ENCODE measurements at regions of chr4 and their contacts with region 1.

Region 1: DNA sequence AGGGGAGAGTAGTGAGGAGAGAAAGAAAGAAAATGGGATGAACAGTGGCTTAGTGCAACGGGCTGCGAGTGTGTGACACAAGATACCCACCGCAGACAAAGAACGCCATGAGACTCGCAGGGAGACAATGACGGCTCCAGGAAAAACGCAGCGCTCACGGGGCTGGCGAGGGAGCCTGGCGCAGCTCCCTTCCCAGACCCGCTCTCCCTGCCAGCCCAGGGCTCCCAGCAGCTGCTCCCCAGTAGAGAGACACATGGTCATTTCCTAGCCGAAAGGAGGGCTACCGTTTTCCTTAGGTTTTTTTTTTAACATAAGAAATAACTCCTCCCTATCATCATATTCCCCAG is 149.5 kb downstream of the MAML3 start:
- DNase-seq: no peak
- H3K4me3 ChIP-seq: peak overlapping the region; percentile 29 to 41
- H3K27ac ChIP-seq: peak overlapping the region; percentile 43
- H3K4me1 ChIP-seq: peaks cover 12% of the 10 kb centered on the region
- H3K27me3 ChIP-seq: no peaks in the 10 kb centered on the region
- CTCF ChIP-seq: no peak
- POLR2A ChIP-seq: no peak

Region 2: DNA sequence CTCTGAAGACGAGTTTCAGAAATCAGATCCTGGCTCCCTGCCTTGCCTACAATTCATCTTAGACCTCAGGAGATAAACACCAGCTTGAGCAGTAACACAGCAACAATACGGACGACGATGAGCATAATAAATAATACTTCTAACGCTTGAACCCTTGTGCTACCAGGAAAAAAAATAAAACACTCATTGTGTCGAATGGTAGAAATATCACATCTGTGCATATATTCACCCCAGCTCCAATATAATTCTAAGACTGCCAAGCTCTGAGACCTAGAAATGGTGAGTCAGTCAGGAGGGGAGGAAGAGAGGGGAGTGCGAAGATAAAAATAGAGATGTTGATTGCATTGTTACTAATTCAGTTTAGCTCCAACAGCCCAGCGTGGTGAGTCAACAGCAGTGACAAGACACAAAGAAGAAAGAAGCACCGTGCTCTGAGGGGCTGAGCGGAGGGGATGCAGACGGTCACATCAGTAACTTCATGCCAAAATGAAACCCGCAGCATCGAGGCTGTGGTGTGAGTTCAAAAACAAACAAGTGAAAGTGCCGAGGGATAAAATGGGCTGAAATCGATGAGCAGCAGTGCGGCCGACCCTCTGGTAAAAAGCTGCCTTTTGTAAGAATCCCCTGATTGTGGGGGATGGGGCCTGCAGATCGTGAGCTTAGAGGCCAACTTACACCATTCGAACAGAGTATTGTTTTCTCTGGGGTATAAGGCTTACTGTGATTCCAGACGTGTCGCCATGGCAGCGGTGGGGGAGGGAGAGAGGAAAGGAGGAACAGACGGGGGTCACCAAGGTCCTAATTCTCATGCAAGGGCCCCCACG is 188.5 kb before region 1 on chr4:
- intact Hi-C with region 1: loop called (anchors 10 kb)
- DNase-seq: no peak
- H3K4me3 ChIP-seq: peak overlapping the region; percentile 37 to 42
- H3K27ac ChIP-seq: peak overlapping the region; percentile 65
- H3K4me1 ChIP-seq: peaks cover 17% of the 10 kb centered on the region
- H3K27me3 ChIP-seq: no peaks in the 10 kb centered on the region
- CTCF ChIP-seq: no peak
- POLR2A ChIP-seq: no peak